ENCODE measurements at regions of chr12 and their contacts with region 1.

Region 1: GRCh38 chr12:92136965-92137721 is 8.5 kb downstream of the BTG1 start:
- DNase-seq: no peak
- H3K4me3 Mint-ChIP-seq: peak overlapping the region; percentile 99
- H3K27ac Mint-ChIP-seq: peak overlapping the region; percentile 98
- H3K4me1 Mint-ChIP-seq: peaks cover 71% of the 10 kb centered on the region
- H3K27me3 Mint-ChIP-seq: no peaks in the 10 kb centered on the region

Region 2: DNA sequence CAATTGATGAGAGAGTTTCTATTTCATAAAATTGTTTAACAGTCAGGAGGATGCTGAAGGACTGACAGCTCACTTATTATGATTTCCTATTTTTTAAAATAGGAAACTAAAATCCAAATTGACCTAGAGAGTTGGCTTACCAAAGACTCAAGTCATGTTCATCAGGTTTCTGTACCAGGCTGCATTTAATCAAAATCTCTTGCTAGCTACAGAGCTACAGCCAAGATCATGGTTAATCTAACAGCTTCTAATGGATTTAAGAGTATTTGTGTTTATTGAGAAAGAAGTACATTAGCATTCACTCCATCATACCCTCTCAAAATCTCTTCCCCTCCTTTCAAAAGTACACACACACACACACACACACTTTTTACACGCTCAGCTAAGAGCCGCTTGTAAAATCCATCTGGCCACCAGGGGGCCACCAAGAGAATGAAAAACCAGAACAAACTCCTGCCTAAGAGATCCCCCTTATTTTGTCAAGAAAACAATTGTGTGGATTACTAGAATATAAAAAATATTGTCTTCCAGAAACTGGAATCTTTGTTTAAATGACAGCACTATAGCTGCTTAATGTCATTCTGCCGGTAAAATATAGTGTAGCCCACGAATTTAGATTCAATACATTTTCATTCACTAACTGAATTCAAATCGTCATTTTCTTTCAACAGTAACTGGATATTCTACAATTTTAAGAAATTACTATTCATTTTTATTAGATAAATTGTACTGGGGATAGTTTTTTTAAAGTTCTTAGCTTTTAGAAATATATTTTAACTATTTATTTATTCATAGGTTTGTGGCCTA is 325.5 kb before region 1 on chr12:
- CTCF ChIA-PET with region 1: interaction called, 13 read pairs
- POLR2A ChIA-PET with region 1: interaction called, 7 read pairs
- DNase-seq: peak; percentile 69
- H3K4me3 Mint-ChIP-seq: no peak overlapping the region
- H3K27ac Mint-ChIP-seq: peak overlapping the region; percentile 13
- H3K4me1 Mint-ChIP-seq: peaks cover 5% of the 10 kb centered on the region
- H3K27me3 Mint-ChIP-seq: no peaks in the 10 kb centered on the region

Region 3: DNA sequence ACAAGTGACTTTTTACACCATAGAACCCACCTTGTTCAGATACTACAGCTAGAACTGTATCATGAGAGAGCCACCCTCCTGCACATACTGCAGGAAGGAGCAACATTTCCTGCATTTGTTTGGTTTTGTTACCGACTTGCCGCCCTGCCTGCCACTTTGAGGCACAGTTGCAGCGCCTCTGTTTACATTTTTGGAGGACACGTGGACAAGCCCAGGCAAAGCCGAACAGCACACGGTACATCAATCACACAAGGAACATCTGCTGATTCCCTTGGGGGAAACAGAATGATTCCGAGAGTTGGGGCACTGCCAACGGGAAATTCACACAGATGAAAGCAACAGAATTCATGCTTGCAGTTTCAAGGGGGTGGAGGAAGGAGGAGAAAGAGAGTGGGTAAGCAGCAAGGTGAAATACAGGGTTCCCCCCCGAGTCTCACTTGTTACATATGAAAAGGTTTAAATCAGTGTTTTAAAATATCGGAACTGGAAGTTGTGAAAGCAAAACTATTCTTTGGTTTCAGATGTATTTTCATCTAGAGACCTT is 102.2 kb before region 1 on chr12:
- CTCF ChIA-PET with region 1: interaction called, 8 read pairs
- POLR2A ChIA-PET with region 1: interaction called, 153 read pairs
- DNase-seq: peak; percentile 54
- H3K4me3 Mint-ChIP-seq: peak overlapping the region; percentile 88
- H3K27ac Mint-ChIP-seq: peak overlapping the region; percentile 95
- H3K4me1 Mint-ChIP-seq: peaks cover 60% of the 10 kb centered on the region
- H3K27me3 Mint-ChIP-seq: no peaks in the 10 kb centered on the region

Region 4: DNA sequence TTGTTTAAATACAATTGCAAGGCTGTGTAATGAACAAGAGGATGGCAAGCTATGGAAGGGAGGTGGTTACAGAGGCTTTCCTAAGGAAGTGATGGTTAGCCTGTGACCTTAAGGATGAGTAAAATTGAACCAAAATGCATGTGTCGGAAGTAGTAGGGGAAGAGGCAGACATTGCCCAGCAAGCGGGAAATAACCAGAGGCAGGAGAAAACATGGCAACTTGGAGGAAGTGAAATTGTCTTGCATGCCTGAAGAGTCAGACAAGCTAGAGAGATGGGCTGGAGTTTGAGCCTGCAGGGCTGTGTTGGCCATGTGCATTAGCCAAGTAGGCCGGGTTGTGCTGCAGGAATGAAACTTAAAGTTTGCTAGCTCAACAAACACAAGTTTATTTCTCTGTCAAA is 87.7 kb before region 1 on chr12:
- CTCF ChIA-PET with region 1: no interaction called
- POLR2A ChIA-PET with region 1: interaction called, 15 read pairs
- DNase-seq: no peak
- H3K4me3 Mint-ChIP-seq: no peak overlapping the region
- H3K27ac Mint-ChIP-seq: no peak overlapping the region
- H3K4me1 Mint-ChIP-seq: peaks cover 65% of the 10 kb centered on the region
- H3K27me3 Mint-ChIP-seq: no peaks in the 10 kb centered on the region

Region 5: GRCh38 chr12:92170050-92170449 is 32.9 kb after region 1 on chr12:
- CTCF ChIA-PET with region 1: no interaction called
- POLR2A ChIA-PET with region 1: no interaction called
- DNase-seq: no peak
- H3K4me3 Mint-ChIP-seq: no peak overlapping the region
- H3K27ac Mint-ChIP-seq: no peak overlapping the region
- H3K4me1 Mint-ChIP-seq: peaks cover 6% of the 10 kb centered on the region
- H3K27me3 Mint-ChIP-seq: no peaks in the 10 kb centered on the region

Region 6: GRCh38 chr12:92208613-92209121 is 71.5 kb after region 1 on chr12:
- CTCF ChIA-PET with region 1: no interaction called
- POLR2A ChIA-PET with region 1: interaction called, 218 read pairs
- DNase-seq: peak; percentile 35
- H3K4me3 Mint-ChIP-seq: peak overlapping the region; percentile 53
- H3K27ac Mint-ChIP-seq: peak overlapping the region; percentile 90
- H3K4me1 Mint-ChIP-seq: peaks cover 36% of the 10 kb centered on the region
- H3K27me3 Mint-ChIP-seq: no peaks in the 10 kb centered on the region

Region 7: GRCh38 chr12:92408072-92408900 is 271.1 kb after region 1 on chr12:
- CTCF ChIA-PET with region 1: no interaction called
- POLR2A ChIA-PET with region 1: interaction called, 327 read pairs
- DNase-seq: peak; percentile 69
- H3K4me3 Mint-ChIP-seq: no peak overlapping the region
- H3K27ac Mint-ChIP-seq: peak overlapping the region; percentile 9
- H3K4me1 Mint-ChIP-seq: peaks cover 40% of the 10 kb centered on the region
- H3K27me3 Mint-ChIP-seq: no peaks in the 10 kb centered on the region